OCI-LY7 (cell line): ENCODE measurements at regions of chr12 and their contacts with region 1.

Region 1: DNA sequence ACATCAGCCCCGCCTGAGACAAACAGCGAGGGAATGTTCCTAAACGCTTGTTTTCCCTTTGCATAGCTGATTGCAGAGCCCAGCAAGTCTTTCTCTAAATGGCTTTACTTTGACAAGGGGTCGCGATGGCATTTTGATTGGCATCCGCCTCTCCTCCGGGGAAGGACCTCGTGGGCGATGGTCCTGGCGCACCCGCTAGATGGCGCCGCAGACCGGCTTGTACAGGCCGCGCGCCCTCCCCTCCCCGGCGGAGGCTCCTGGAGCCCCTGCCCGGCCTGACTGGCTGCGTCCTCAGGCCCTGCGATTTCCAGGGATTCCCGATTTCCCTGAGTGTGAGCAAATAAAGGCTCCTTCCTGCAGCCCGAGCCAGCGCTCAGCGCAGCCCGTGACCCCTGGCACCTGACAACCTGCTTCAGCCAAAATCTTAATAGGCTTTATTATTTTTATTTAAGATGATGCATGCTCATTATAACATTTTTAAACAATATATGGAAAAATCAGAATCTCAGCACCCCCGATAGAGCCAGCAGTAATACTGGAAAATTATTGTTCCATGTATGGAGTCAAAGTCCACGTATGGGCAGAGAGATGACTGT is 468.3 kb downstream of the AACS start:
- DNase-seq: peak; percentile 56
- H3K4me3 ChIP-seq: no peak overlapping the region
- H3K27ac ChIP-seq: no peak overlapping the region
- H3K4me1 ChIP-seq: no peaks in the 10 kb centered on the region
- CTCF ChIP-seq: peak; percentile 89

Region 2: DNA sequence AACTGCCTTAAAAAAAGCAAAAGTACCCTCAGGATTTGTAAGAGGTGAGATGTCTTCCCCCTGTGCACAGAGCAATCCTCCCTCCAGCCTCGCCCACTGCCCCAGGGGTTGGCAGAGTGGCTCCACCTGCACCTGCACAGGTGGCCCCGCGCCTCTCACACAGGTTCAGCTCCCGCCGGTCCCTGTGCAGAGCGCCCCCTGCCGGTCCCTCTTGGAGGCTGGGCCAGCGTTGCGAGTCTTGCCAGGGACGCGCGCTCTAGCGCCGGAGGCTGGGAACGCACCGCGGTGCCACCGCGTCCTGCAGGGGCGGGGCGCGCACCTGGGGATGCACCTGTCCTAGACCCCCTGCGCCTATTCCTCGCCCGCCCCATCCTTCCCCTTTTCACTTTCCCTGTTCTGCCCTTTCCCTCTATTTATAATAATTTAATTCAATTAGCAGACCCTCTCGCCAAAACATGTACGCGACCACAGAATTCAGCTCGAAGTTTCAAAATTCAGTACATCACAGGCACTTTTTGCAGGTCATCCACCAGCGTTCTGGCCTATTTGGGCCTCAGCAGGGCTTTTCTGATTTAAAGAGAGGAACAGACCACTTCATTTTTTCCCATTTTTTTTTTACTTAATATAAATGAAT is 150.3 kb after region 1 on chr12:
- CTCF ChIA-PET with region 1: no interaction called
- POLR2A ChIA-PET with region 1: no interaction called
- intact Hi-C with region 1: loop called (anchors 5 kb)
- DNase-seq: peak; percentile 61
- H3K4me3 ChIP-seq: no peak overlapping the region
- H3K27ac ChIP-seq: no peak overlapping the region
- H3K4me1 ChIP-seq: no peaks in the 10 kb centered on the region
- CTCF ChIP-seq: peak; percentile 80

Region 3: DNA sequence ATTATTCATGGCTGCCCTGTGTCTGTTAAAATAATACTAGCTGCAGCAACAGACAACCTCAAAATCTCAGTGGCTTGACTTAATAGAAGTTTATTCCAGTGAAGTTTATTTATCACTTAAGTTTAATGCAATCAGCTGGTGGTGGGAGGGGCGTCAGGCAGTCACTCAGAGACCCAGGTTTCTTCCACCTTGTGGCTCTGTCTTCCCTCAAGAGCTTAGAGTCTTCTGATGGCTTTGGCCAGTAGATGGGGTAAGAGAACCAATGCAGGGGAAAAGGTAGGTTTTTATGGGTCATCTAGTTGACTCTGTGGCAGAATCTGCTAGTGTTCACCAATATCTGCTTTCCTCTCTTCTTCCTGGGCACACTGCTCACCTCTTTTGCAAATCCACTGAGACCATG is 200.6 kb after region 1 on chr12:
- CTCF ChIA-PET with region 1: no interaction called
- POLR2A ChIA-PET with region 1: no interaction called
- intact Hi-C with region 1: no loop called
- DNase-seq: peak; percentile 4
- H3K4me3 ChIP-seq: no peak overlapping the region
- H3K27ac ChIP-seq: no peak overlapping the region
- H3K4me1 ChIP-seq: no peaks in the 10 kb centered on the region
- CTCF ChIP-seq: peak; percentile 34; the same call in 1 of the 2 replicates

Region 4: DNA sequence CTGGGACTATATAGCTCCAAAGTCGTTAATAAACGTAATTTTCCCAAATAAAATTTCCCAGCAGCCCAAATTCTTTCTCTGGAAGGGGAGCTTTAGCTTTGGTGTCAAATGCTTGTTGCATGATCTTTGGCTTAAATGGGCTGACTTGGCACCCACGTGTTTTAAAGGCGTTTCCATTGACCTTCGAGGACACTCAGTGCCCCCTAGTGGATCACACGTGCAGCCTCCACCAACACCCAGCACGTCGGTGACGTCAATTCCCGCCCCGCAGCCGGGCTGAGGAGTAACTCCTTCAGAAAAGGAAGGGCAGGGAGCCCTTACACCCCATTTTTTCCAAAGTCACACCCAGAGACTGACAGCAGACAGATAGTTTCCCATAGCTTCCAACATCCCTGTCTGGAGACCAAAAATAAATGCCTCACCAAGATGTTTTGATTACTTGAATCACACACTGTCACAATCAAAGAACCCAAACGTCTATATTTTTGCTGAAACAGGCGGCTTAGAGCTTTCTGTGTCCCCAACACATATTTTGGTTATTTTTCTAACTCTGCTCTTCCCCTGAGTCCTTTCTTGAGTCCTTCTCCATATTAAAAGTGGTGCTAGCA is 239.6 kb after region 1 on chr12:
- CTCF ChIA-PET with region 1: no interaction called
- POLR2A ChIA-PET with region 1: no interaction called
- intact Hi-C with region 1: loop called (anchors 1 kb)
- DNase-seq: peak; percentile 77
- H3K4me3 ChIP-seq: no peak overlapping the region
- H3K27ac ChIP-seq: no peak overlapping the region
- H3K4me1 ChIP-seq: no peaks in the 10 kb centered on the region
- CTCF ChIP-seq: peak; percentile 89